Activated T-helper 1 cell treated with anti-CD3 and anti-CD28 coated beads, Interleukin-12 subunit alpha, Interleukin-12 subunit beta, Interleukin-2, Interleukin-4 antibody, amounts not matched to agents 30 ng/mL and 10 ng/mL and 1 ng/mL, durations not matched to agents 14 hours and 24 hours and 36 hours (primary cell): ENCODE measurements at regions of chr1 and their contacts with region 1.

Region 1: GRCh38 chr1:59759156-59759925 is 55.4 kb upstream of the HOOK1 start:
- DNase-seq: peak; percentile 63
- H3K4me3 Mint-ChIP-seq: peak overlapping the region; percentile 13
- H3K27ac Mint-ChIP-seq: no peak overlapping the region
- H3K4me1 Mint-ChIP-seq: peaks cover 12% of the 10 kb centered on the region
- H3K27me3 Mint-ChIP-seq: no peaks in the 10 kb centered on the region

Region 2: DNA sequence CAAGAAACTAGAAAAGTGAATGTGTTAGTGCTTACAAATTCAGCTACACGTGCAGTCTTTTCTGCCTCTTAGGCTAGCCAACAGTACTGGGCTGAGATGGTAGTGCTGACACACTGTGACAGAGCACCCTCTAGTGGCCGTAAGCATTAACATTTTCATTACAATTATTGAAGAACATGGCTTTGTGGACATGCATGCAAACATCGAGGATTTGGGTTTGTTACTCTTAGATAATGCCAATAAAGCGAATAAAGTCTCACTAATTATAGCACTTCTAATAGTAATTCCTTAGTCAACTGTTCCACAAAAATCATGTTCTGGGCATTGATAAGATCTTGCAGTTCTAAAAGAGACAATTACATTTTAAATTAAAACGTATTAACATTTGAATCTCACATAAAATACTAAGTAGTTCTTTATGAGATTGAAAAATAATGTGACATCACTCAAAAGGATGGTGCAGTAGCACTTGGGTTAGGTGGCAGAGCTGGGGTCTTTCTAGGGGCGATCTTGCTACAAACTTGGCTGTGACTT is 1106.6 kb before region 1 on chr1:
- intact Hi-C with region 1: loop called (anchors 1 kb)
- DNase-seq: peak; percentile 43
- H3K4me3 Mint-ChIP-seq: no peak overlapping the region
- H3K27ac Mint-ChIP-seq: no peak overlapping the region
- H3K4me1 Mint-ChIP-seq: peaks cover 7% of the 10 kb centered on the region
- H3K27me3 Mint-ChIP-seq: no peaks in the 10 kb centered on the region

Region 3: GRCh38 chr1:58699011-58699762 is 1060.2 kb before region 1 on chr1:
- intact Hi-C with region 1: loop called (anchors 1 kb)
- DNase-seq: no peak
- H3K4me3 Mint-ChIP-seq: peak overlapping the region; percentile 99
- H3K27ac Mint-ChIP-seq: peak overlapping the region; percentile 98
- H3K4me1 Mint-ChIP-seq: peaks cover 9% of the 10 kb centered on the region
- H3K27me3 Mint-ChIP-seq: no peaks in the 10 kb centered on the region

Region 4: GRCh38 chr1:58739856-58740466 is 1019.4 kb before region 1 on chr1:
- intact Hi-C with region 1: loop called (anchors 1 kb)
- DNase-seq: no peak
- H3K4me3 Mint-ChIP-seq: no peak overlapping the region
- H3K27ac Mint-ChIP-seq: no peak overlapping the region
- H3K4me1 Mint-ChIP-seq: peaks cover 18% of the 10 kb centered on the region
- H3K27me3 Mint-ChIP-seq: peaks cover 7% of the 10 kb centered on the region

Region 5: GRCh38 chr1:59798600-59798999 is 39.3 kb after region 1 on chr1:
- intact Hi-C with region 1: no loop called
- DNase-seq: no peak
- H3K4me3 Mint-ChIP-seq: no peak overlapping the region
- H3K27ac Mint-ChIP-seq: no peak overlapping the region
- H3K4me1 Mint-ChIP-seq: no peaks in the 10 kb centered on the region
- H3K27me3 Mint-ChIP-seq: peaks cover 21% of the 10 kb centered on the region